ENCODE measurements at regions of chr3 and their contacts with region 1.

Region 1: GRCh38 chr3:177597311-177598096 is 400.2 kb upstream of the TBL1XR1 start:
- DNase-seq: no peak
- ATAC-seq: peak; percentile 84
- H3K4me3 Mint-ChIP-seq: peak overlapping the region; percentile 68
- H3K27ac Mint-ChIP-seq: peak overlapping the region; percentile 83
- H3K4me1 Mint-ChIP-seq: peaks cover 56% of the 10 kb centered on the region
- H3K27me3 Mint-ChIP-seq: no peaks in the 10 kb centered on the region
- CTCF ChIP-seq: no peak

Region 2: GRCh38 chr3:177578488-177578887 is 19.0 kb before region 1 on chr3:
- CTCF ChIA-PET with region 1: no interaction called
- POLR2A ChIA-PET with region 1: no interaction called
- intact Hi-C with region 1: loop called (anchors 2 kb)
- DNase-seq: no peak
- ATAC-seq: peak; percentile 71
- H3K4me3 Mint-ChIP-seq: no peak overlapping the region
- H3K27ac Mint-ChIP-seq: peak overlapping the region; percentile 7
- H3K4me1 Mint-ChIP-seq: peaks cover 14% of the 10 kb centered on the region
- H3K27me3 Mint-ChIP-seq: no peaks in the 10 kb centered on the region
- CTCF ChIP-seq: no peak

Region 3: GRCh38 chr3:177640319-177640997 is 43.0 kb after region 1 on chr3:
- CTCF ChIA-PET with region 1: no interaction called
- POLR2A ChIA-PET with region 1: no interaction called
- intact Hi-C with region 1: no loop called
- DNase-seq: no peak
- ATAC-seq: no peak
- H3K4me3 Mint-ChIP-seq: no peak overlapping the region
- H3K27ac Mint-ChIP-seq: no peak overlapping the region
- H3K4me1 Mint-ChIP-seq: peaks cover 5% of the 10 kb centered on the region
- H3K27me3 Mint-ChIP-seq: no peaks in the 10 kb centered on the region
- CTCF ChIP-seq: no peak

Region 4: GRCh38 chr3:177860184-177860583 is 262.7 kb after region 1 on chr3:
- CTCF ChIA-PET with region 1: no interaction called
- POLR2A ChIA-PET with region 1: no interaction called
- intact Hi-C with region 1: no loop called
- DNase-seq: no peak
- ATAC-seq: no peak
- H3K4me3 Mint-ChIP-seq: no peak overlapping the region
- H3K27ac Mint-ChIP-seq: no peak overlapping the region
- H3K4me1 Mint-ChIP-seq: no peaks in the 10 kb centered on the region
- H3K27me3 Mint-ChIP-seq: peaks cover 9% of the 10 kb centered on the region
- CTCF ChIP-seq: no peak

Measured in activated B cell treated with CpG ODN at 0.5 μM for 24 hours (primary cell).